ENCODE measurements at regions of chr1 and their contacts with region 1.

Region 1: GRCh38 chr1:30707412-30708360 is 15.7 kb downstream of the MATN1 start:
- DNase-seq: peak; percentile 76
- H3K4me3 ChIP-seq: no peak overlapping the region
- H3K27ac ChIP-seq: no peak overlapping the region
- H3K4me1 ChIP-seq: no peaks in the 10 kb centered on the region
- H3K27me3 ChIP-seq: no peaks in the 10 kb centered on the region
- CTCF ChIP-seq: peak; percentile 72

Region 2: GRCh38 chr1:29341936-29342335 is 1365.8 kb before region 1 on chr1:
- intact Hi-C with region 1: loop called (anchors 5 kb)
- DNase-seq: no peak
- H3K4me3 ChIP-seq: no peak overlapping the region
- H3K27ac ChIP-seq: no peak overlapping the region
- H3K4me1 ChIP-seq: no peaks in the 10 kb centered on the region
- H3K27me3 ChIP-seq: no peaks in the 10 kb centered on the region
- CTCF ChIP-seq: no peak

Region 3: DNA sequence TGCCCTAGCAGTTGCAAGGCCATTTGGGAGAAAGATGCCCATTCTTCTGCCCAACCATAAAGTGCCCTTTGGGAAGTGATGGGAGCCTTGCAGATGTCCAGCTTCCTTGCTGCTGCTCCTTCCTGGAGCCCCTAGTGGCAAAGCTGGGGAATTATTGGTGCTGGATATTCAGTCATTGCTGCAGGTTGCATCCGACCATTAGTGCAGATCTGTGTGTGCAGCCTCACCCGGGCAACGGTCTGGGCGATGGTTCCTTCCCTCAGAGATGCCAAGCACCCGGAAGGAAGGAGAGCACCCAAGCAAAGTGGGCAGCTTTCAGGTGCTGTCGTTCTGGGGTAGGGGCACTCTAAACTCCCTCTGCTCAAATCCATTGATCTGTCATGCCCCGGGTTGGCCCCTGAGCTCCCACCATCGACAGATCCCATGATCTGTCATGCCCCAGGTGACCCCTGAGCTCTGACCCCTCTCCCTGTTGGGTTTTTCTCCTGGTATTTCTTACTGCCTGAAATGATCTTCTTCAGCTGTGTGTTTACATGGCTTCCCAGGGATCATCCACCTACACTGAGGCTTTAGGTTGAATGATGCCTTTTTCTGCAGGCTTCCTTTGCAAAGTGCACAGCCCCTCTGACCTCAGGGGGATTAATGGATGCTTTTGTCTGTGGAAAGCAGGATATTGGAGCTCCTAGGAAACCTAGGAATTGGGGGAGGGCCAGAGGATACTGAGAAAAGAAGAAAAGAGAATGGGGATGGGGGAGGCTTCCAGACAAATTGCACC is 1003.9 kb before region 1 on chr1:
- intact Hi-C with region 1: loop called (anchors 10 kb)
- DNase-seq: peak; percentile 20
- H3K4me3 ChIP-seq: no peak overlapping the region
- H3K27ac ChIP-seq: no peak overlapping the region
- H3K4me1 ChIP-seq: no peaks in the 10 kb centered on the region
- H3K27me3 ChIP-seq: no peaks in the 10 kb centered on the region
- CTCF ChIP-seq: peak; percentile 56

Region 4: DNA sequence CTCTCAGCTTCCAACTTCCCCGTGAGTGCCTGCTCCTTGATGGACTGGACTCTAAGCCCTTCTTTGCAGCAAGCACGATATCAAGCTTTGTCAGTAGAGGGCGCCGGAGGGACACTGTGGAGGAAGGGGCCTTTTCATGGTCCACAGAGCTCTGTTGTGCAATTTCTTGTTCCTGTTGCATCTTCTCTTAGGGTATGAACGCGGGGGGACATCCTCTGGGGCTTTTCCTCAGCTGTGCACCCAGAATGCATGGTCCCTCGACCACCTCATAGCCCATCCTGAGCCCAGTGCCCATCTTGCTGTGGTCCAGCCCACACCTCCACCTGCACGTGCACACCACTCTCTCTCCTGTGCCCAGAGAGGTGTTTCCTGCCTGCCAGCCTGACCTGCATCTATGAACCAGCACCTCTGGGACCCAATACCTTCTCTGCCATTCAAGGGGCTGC is 914.6 kb before region 1 on chr1:
- intact Hi-C with region 1: loop called (anchors 5 kb)
- DNase-seq: peak; percentile 85
- H3K4me3 ChIP-seq: no peak overlapping the region
- H3K27ac ChIP-seq: no peak overlapping the region
- H3K4me1 ChIP-seq: no peaks in the 10 kb centered on the region
- H3K27me3 ChIP-seq: no peaks in the 10 kb centered on the region
- CTCF ChIP-seq: peak; percentile 64

Region 5: DNA sequence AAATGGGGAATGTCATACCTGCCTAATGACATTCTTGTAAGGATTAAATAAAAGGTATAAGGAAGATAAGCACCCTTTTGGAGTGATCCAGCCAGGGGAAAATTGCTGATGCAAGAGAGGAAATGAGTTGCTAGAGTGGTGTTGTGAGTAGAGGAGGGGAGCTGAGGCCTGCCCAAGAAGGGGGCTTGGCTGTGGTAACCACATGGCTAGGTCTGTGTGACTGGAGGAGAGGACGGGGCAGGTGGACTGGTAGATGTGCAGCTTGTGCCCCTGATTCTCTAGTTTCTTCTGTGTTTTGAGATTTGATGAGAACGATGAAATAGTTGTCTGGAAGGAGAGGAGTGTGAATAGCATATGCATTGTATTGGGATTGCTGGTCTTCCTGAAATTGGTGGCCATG is 1478.4 kb after region 1 on chr1:
- intact Hi-C with region 1: no loop called
- DNase-seq: no peak
- H3K4me3 ChIP-seq: no peak overlapping the region
- H3K27ac ChIP-seq: no peak overlapping the region
- H3K4me1 ChIP-seq: peaks cover 6% of the 10 kb centered on the region
- H3K27me3 ChIP-seq: no peaks in the 10 kb centered on the region
- CTCF ChIP-seq: no peak